Endothelial cell of umbilical vein (primary cell): ENCODE measurements at regions of chr7 and their contacts with region 1.

Region 1: DNA sequence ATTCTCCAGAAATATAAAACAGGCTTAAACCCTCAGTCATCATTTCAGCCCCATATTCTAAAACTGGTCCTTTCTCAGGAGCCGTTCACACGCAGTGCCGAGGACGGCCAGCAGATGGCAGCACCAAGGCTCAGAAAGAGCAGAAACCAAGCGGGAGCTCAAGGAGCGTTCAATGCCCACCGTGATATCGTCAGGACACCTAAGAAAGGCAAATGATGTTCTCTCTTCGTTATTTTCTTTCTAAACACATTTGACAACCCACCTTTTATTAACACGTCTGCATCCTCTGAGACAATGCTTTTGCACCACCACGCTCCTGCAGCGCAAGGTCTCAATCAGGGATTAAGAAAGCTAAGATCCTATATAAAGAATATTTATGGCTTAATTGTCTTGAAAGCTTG is 45.7 kb upstream of the RBM33 start:
- DNase-seq: peak; percentile 73
- H3K4me3 ChIP-seq: no peak overlapping the region
- H3K27ac ChIP-seq: no peak overlapping the region
- H3K4me1 ChIP-seq: no peaks in the 10 kb centered on the region
- H3K27me3 ChIP-seq: peaks cover 3 to 14% of the 10 kb centered on the region in 2 experiments
- CTCF ChIP-seq: peak; percentile 93 to 98
- POLR2A ChIP-seq: no peak

Region 2: DNA sequence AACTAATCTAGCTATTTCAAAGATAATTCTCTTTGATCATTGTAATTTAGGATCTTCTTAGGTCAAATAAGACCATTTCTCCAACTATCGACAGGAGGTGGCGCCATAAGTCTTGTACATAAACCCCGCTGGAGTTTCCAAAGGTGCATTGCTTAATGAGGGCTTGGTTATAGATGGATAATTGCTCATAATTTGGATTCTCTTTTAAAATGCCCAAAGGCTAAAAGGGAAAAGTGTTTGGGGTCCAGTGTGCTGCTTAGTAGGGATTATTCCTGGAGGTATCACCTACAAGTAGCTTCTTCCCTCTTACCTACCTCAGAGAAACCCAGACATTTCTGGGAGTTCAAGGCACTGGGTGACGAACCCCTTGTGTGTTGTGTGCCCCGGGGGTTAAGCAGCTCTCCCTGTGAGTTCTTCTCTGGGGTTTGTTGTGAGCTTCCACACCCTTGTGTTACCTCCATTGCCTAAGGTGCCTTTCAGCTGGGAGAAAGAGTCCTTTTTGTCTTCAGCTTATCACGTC is 671.1 kb before region 1 on chr7:
- CTCF ChIA-PET with region 1: interaction called, 24 read pairs
- POLR2A ChIA-PET with region 1: no interaction called
- dilution Hi-C with region 1: no loop called
- intact Hi-C with region 1: loop called (anchors 5 kb)
- DNase-seq: peak; percentile 86
- H3K4me3 ChIP-seq: peak overlapping the region; percentile 45 to 91 (median 89)
- H3K27ac ChIP-seq: peak overlapping the region; percentile 49
- H3K4me1 ChIP-seq: peaks cover 8% of the 10 kb centered on the region
- H3K27me3 ChIP-seq: peaks cover 0 to 5% of the 10 kb centered on the region in 2 experiments
- CTCF ChIP-seq: peak; percentile 45 to 53
- POLR2A ChIP-seq: no peak

Region 3: DNA sequence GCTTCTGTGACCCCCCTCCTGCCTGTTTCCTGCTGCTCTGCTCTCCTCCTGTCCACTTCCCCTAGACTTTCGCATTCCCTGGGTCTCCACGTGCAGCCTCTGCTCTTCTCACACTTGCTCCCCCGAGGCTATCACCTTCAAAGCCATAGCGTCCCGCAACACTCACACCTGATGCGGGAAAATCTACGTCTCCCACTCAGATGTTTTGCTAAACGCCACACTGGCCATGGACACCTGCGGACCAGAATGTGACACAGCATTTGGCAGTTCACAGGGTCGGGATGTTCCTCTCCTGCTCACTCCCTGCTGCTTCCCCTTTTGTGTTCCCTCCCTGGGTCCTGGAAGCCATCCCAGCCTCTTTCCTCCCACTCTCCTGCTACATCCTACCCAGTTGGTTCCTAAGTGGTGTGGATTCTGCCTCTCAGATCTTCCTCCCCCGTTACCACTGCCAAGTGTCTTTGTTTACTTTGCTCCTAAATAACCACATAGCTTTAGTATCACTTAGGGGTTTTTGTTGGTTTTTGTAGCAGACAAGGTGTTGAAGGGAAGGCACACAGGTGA is 11.9 kb after region 1 on chr7:
- CTCF ChIA-PET with region 1: interaction called, 44 read pairs
- POLR2A ChIA-PET with region 1: no interaction called
- dilution Hi-C with region 1: no loop called
- intact Hi-C with region 1: no loop called
- DNase-seq: no peak
- H3K4me3 ChIP-seq: no peak overlapping the region
- H3K27ac ChIP-seq: no peak overlapping the region
- H3K4me1 ChIP-seq: no peaks in the 10 kb centered on the region
- H3K27me3 ChIP-seq: no peaks in the 10 kb centered on the region
- CTCF ChIP-seq: no peak
- POLR2A ChIP-seq: no peak

Region 4: GRCh38 chr7:155665957-155666287 is 67.1 kb after region 1 on chr7:
- CTCF ChIA-PET with region 1: interaction called, 15 read pairs
- POLR2A ChIA-PET with region 1: no interaction called
- dilution Hi-C with region 1: no loop called
- intact Hi-C with region 1: no loop called
- DNase-seq: peak; percentile 66
- H3K4me3 ChIP-seq: no peak overlapping the region
- H3K27ac ChIP-seq: peak overlapping the region; percentile 35
- H3K4me1 ChIP-seq: peaks cover 22% of the 10 kb centered on the region
- H3K27me3 ChIP-seq: no peaks in the 10 kb centered on the region
- CTCF ChIP-seq: no peak
- POLR2A ChIP-seq: no peak

Region 5: DNA sequence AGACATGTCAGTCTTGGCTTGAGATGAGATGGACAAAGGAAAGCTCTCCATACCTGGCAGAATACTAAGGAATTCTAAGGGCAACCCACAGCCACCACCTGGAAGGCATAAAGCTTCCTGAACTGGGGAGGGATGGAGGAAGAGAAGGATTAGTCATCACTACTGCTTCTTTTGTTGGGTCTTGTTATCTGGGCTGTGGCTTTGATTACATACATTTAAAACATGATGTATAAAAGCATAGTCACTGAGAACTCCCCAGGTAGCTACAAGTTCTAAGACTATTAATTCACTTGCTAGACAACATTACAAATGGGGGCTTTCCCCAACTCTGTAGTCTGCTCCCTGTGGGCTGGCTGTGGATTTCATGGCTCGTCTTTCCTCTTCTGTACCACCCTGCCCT is 103.8 kb after region 1 on chr7:
- CTCF ChIA-PET with region 1: interaction called, 61 read pairs
- POLR2A ChIA-PET with region 1: no interaction called
- dilution Hi-C with region 1: no loop called
- intact Hi-C with region 1: no loop called
- DNase-seq: peak; percentile 36
- H3K4me3 ChIP-seq: no peak overlapping the region
- H3K27ac ChIP-seq: no peak overlapping the region
- H3K4me1 ChIP-seq: peaks cover 7% of the 10 kb centered on the region
- H3K27me3 ChIP-seq: no peaks in the 10 kb centered on the region
- CTCF ChIP-seq: no peak
- POLR2A ChIP-seq: no peak

Region 6: DNA sequence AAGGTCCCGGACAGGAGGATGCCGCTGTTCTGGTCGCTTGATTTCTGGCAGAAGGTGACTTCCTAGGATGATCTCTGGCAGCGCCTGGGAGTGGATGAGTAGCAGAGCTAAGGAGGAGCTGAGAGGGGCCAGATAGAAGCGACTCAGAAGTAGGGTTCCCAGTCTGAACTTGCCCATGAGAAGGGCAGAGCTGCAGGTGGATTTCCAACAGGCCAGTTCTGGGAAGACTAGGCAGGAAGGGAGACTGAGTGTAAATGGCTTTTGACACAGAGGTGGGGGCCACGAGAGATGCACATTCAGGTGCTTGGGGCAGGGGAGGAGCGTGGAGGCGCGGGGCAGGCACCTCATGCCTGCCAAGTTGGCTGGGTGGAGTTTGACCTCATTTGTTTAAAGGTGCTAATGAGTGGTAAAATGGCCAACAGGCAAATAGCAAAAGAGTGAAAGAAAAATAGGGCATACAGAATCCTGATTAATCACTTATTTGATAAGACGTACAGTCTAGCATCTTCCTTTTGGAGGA is 154.7 kb after region 1 on chr7:
- CTCF ChIA-PET with region 1: interaction called, 11 read pairs
- POLR2A ChIA-PET with region 1: no interaction called
- dilution Hi-C with region 1: no loop called
- intact Hi-C with region 1: no loop called
- DNase-seq: no peak
- H3K4me3 ChIP-seq: no peak overlapping the region
- H3K27ac ChIP-seq: no peak overlapping the region
- H3K4me1 ChIP-seq: peaks cover 6% of the 10 kb centered on the region
- H3K27me3 ChIP-seq: no peaks in the 10 kb centered on the region
- CTCF ChIP-seq: no peak
- POLR2A ChIP-seq: no peak

Region 7: GRCh38 chr7:155787171-155787851 is 188.5 kb after region 1 on chr7:
- CTCF ChIA-PET with region 1: interaction called, 12 read pairs
- POLR2A ChIA-PET with region 1: no interaction called
- dilution Hi-C with region 1: no loop called
- intact Hi-C with region 1: no loop called
- DNase-seq: no peak
- H3K4me3 ChIP-seq: peak overlapping the region in 2 of 3 experiments; percentile 32 to 39
- H3K27ac ChIP-seq: no peak overlapping the region
- H3K4me1 ChIP-seq: no peaks in the 10 kb centered on the region
- H3K27me3 ChIP-seq: peaks cover 0 to 2% of the 10 kb centered on the region in 2 experiments
- CTCF ChIP-seq: no peak
- POLR2A ChIP-seq: no peak